ENCODE measurements at regions of chr1 and their contacts with region 1.

Region 1: DNA sequence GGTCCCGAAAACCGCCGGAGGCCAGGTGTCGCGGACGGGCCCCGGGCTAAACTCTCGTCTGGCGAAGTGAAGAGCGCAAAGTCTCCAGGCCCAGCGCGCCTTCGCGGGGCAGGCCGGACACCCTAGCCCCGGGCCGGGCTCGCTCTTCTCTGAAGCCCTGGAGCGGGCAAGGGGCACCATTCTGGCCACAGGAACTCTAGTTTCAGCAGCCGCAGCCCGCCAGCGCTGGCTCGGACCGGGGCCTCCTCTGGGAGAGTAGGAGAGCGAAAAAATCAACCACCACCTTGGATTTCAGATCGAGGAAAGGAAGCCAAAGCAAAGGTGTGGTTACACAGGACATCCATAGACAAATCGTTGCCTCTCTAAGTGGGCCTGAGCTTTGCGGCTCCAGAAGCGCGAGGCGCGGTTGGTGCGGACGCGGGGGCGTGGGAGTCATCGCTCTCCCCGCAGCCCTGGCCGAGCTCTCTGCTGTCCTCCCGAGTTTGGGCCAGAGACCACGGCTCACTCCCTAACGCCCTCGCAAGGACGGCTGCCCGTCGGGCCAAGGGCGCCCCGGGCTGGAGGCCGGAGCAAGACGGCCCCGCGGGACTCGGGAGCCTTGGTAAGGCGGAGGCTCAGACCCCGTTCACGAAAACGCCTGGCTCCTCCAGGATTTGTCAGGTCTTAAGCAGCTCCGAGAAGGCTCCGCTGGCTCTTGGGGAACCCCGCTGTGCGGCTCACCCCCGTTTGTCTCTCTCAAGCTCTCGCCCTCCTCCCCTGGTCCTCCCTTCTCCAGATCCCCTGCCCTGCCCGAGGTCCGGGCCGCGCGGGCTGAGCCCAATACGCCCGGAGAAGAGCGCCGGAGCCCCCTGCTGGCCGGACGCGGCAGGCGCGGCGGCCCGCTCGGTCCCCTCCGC is 132.9 kb upstream of the DPYD start:
- DNase-seq: no peak
- ATAC-seq: peak; percentile 99
- H3K4me3 ChIP-seq: peak overlapping the region; percentile 24; the same call in 1 of the 2 replicates
- H3K27ac ChIP-seq: no peak overlapping the region
- H3K4me1 ChIP-seq: no peaks in the 10 kb centered on the region
- H3K27me3 ChIP-seq: peaks cover 1 to 11% of the 10 kb centered on the region in 2 experiments; a peak in 2 of 4 replicates
- CTCF ChIP-seq: peak; percentile 66 to 86 (median 71); a peak in 5 of 6 replicates
- EP300 ChIP-seq: no peak
- POLR2A ChIP-seq: no peak
- RAD21 ChIP-seq: peak; percentile 85

Region 2: GRCh38 chr1:96236156-96236739 is 1817.5 kb before region 1 on chr1:
- CTCF ChIA-PET with region 1: interaction called, 6 read pairs
- POLR2A ChIA-PET with region 1: no interaction called
- RAD21 ChIA-PET with region 1: no interaction called
- SMC1A ChIA-PET with region 1: interaction called, 3 read pairs
- in situ Hi-C with region 1: no loop called
- intact Hi-C with region 1: loop called (anchors 10 kb)
- DNase-seq: no peak
- ATAC-seq: peak; percentile 48; the same call in 1 of the 3 replicates
- H3K4me3 ChIP-seq: no peak overlapping the region
- H3K27ac ChIP-seq: no peak overlapping the region
- H3K4me1 ChIP-seq: no peaks in the 10 kb centered on the region
- H3K27me3 ChIP-seq: no peaks in the 10 kb centered on the region
- CTCF ChIP-seq: peak; percentile 29 to 52 (median 47); a peak in 5 of 6 replicates
- EP300 ChIP-seq: no peak
- POLR2A ChIP-seq: no peak
- RAD21 ChIP-seq: peak; percentile 64

Region 3: GRCh38 chr1:97050501-97050900 is 1003.2 kb before region 1 on chr1:
- CTCF ChIA-PET with region 1: no interaction called
- POLR2A ChIA-PET with region 1: no interaction called
- RAD21 ChIA-PET with region 1: interaction called, 3 read pairs
- SMC1A ChIA-PET with region 1: interaction called, 4 read pairs
- in situ Hi-C with region 1: no loop called
- intact Hi-C with region 1: loop called (anchors 5 kb)
- DNase-seq: no peak
- ATAC-seq: peak; percentile 62
- H3K4me3 ChIP-seq: no peak overlapping the region
- H3K27ac ChIP-seq: no peak overlapping the region
- H3K4me1 ChIP-seq: no peaks in the 10 kb centered on the region
- H3K27me3 ChIP-seq: no peaks in the 10 kb centered on the region
- CTCF ChIP-seq: peak; percentile 6 to 34 (median 8); a peak in 3 of 6 replicates
- EP300 ChIP-seq: no peak
- POLR2A ChIP-seq: no peak
- RAD21 ChIP-seq: peak; percentile 38

Region 4: GRCh38 chr1:97186404-97186803 is 867.3 kb before region 1 on chr1:
- CTCF ChIA-PET with region 1: no interaction called
- POLR2A ChIA-PET with region 1: no interaction called
- RAD21 ChIA-PET with region 1: no interaction called
- SMC1A ChIA-PET with region 1: no interaction called
- in situ Hi-C with region 1: no loop called
- intact Hi-C with region 1: loop called (anchors 5 kb)
- DNase-seq: no peak
- ATAC-seq: 0 out of 3 replicates have a peak, but pooled peaks have one; percentile 27
- H3K4me3 ChIP-seq: no peak overlapping the region
- H3K27ac ChIP-seq: no peak overlapping the region
- H3K4me1 ChIP-seq: no peaks in the 10 kb centered on the region
- H3K27me3 ChIP-seq: no peaks in the 10 kb centered on the region
- CTCF ChIP-seq: peak in 2 of 3 experiments; percentile 7 to 20; a peak in 1 of 6 replicates
- EP300 ChIP-seq: no peak
- POLR2A ChIP-seq: no peak
- RAD21 ChIP-seq: 0 out of 2 replicates have a peak, but pooled peaks have one; percentile 14

Region 5: GRCh38 chr1:97820470-97821188 is 233.1 kb before region 1 on chr1:
- CTCF ChIA-PET with region 1: interaction called, 3 read pairs
- POLR2A ChIA-PET with region 1: no interaction called
- RAD21 ChIA-PET with region 1: no interaction called
- SMC1A ChIA-PET with region 1: interaction called, 3 read pairs
- in situ Hi-C with region 1: no loop called
- intact Hi-C with region 1: loop called (anchors 5 kb)
- DNase-seq: no peak
- ATAC-seq: peak; percentile 78
- H3K4me3 ChIP-seq: no peak overlapping the region
- H3K27ac ChIP-seq: no peak overlapping the region
- H3K4me1 ChIP-seq: no peaks in the 10 kb centered on the region
- H3K27me3 ChIP-seq: no peaks in the 10 kb centered on the region
- CTCF ChIP-seq: peak; percentile 11 to 56 (median 36); a peak in 5 of 6 replicates
- EP300 ChIP-seq: no peak
- POLR2A ChIP-seq: no peak
- RAD21 ChIP-seq: peak; percentile 72

Region 6: GRCh38 chr1:97844531-97845089 is 209.1 kb before region 1 on chr1:
- CTCF ChIA-PET with region 1: no interaction called
- POLR2A ChIA-PET with region 1: no interaction called
- RAD21 ChIA-PET with region 1: no interaction called
- SMC1A ChIA-PET with region 1: no interaction called
- in situ Hi-C with region 1: no loop called
- intact Hi-C with region 1: no loop called
- DNase-seq: no peak
- ATAC-seq: no peak
- H3K4me3 ChIP-seq: no peak overlapping the region
- H3K27ac ChIP-seq: no peak overlapping the region
- H3K4me1 ChIP-seq: peaks cover 3% of the 10 kb centered on the region; the same call in 1 of the 2 replicates
- H3K27me3 ChIP-seq: no peaks in the 10 kb centered on the region
- CTCF ChIP-seq: no peak
- EP300 ChIP-seq: no peak
- POLR2A ChIP-seq: no peak
- RAD21 ChIP-seq: no peak

Region 7: GRCh38 chr1:98104289-98104688 is 50.6 kb after region 1 on chr1:
- CTCF ChIA-PET with region 1: no interaction called
- POLR2A ChIA-PET with region 1: no interaction called
- RAD21 ChIA-PET with region 1: no interaction called
- SMC1A ChIA-PET with region 1: no interaction called
- in situ Hi-C with region 1: no loop called
- intact Hi-C with region 1: no loop called
- DNase-seq: no peak
- ATAC-seq: no peak
- H3K4me3 ChIP-seq: no peak overlapping the region
- H3K27ac ChIP-seq: no peak overlapping the region
- H3K4me1 ChIP-seq: no peaks in the 10 kb centered on the region
- H3K27me3 ChIP-seq: no peaks in the 10 kb centered on the region
- CTCF ChIP-seq: no peak
- EP300 ChIP-seq: no peak
- POLR2A ChIP-seq: no peak
- RAD21 ChIP-seq: no peak